Left cardiac atrium (tissue), 4 donors: ENCODE measurements at regions of chr15 and their contacts with region 1.

Region 1: GRCh38 chr15:41989259-41989933 is 17.0 kb upstream of the EHD4 start:
- DNase-seq: peak; percentile 85
- ATAC-seq: peak; percentile 88 to 89

Region 2: GRCh38 chr15:40702077-40702476 is 1287.3 kb before region 1 on chr15:
- intact Hi-C with region 1: no loop called
- DNase-seq: no peak
- ATAC-seq: no peak

Region 3: GRCh38 chr15:41476416-41477048 is 512.9 kb before region 1 on chr15:
- intact Hi-C with region 1: no loop called
- DNase-seq: no peak
- ATAC-seq: no peak

Region 4: GRCh38 chr15:41774062-41774881 is 215.1 kb before region 1 on chr15 and contains the start of gene MAPKBP1:
- intact Hi-C with region 1: loop called in 1 of 2 experiments (anchors 10 kb)
- DNase-seq: peak; percentile 98
- ATAC-seq: peak; percentile 97
- total RNA-seq, gene MAPKBP1: 13.9 to 19.0 TPM

Region 5: DNA sequence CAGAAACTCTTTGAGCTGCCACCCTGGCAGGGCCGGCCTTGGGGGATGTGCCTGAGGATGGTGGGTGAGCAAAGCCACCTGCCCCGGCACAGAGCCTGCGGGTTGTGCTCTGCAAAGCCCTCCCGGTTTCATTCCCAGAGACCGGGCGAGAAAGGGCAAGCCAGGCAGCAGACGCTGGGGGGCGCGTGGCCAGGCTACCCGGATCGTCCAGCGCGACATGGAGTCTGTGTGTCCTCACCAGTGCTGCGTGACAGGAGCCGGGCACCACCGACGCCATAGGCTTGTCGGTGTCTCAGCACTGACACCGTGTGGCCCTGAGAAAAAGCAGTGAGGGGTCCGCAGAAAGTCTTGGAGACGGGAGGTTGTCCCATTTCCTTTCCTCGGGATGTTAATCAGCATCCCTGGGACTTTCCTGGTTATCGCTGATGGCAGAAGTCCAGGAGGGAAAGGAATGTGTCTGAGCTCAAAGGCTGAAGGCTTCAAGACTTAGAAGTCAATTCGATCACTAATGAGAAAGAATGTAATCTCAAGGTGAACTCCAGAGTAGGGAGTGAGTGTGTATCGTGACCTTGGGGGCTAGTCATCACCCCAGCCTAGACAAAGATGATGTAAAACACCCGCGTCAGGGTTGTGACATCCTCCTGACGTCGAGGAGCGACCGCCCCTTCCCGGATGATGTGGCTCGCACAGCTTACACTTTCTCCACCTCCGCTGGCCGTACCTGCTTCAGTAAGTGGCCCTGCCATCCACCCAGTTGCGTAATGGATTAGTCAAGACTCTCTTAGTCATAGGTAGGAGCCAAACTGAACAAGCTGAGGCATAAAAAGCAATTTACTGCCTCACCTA is 67.8 kb after region 1 on chr15:
- intact Hi-C with region 1: loop called (anchors 1 to 2 kb)
- DNase-seq: peak; percentile 85
- ATAC-seq: peak; percentile 91 to 93

Region 6: DNA sequence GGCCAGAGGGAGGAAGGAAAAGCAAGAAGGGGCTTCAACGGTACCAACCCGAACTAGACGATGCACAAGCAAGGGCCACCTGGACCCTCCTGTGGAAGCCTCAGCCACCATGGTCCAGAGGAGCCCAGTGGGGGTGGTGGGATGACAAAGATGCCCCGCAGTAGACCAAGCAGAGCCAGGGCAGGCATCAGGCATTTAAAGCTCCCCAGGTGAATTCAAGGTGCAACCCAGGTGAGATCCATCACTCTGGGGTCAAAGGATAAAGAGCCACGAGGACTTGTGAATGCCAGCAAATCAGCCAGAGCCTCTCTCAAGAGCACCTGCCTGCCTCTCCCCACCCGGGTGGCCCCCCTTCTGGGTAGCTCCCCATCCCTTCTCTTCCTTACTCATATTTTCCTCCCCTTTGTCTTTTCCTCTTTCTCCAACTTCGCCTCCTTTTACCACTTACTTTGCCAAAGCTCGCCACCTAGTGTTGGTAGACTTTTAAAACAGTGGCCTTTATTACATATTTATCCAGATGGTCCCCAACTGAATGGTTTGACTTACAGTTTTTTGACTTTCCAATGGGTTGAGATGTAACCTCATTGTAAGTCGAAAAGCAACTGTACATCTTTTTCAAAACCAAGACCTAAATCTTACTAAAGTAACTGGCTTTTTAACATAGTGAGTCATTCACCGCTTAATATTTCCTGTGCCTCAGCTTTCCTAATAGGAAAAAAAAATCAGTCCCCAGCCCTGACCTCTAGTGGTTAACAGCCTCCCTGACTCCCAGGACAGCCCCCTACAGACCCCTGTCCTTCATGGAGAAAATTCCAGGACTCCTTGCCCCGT is 148.2 kb after region 1 on chr15:
- intact Hi-C with region 1: loop called in 1 of 2 experiments (anchors 5 kb)
- DNase-seq: no peak
- ATAC-seq: peak in 1 of 2 donors; percentile 45